ENCODE measurements at regions of chr19 and their contacts with region 1.

Region 1: DNA sequence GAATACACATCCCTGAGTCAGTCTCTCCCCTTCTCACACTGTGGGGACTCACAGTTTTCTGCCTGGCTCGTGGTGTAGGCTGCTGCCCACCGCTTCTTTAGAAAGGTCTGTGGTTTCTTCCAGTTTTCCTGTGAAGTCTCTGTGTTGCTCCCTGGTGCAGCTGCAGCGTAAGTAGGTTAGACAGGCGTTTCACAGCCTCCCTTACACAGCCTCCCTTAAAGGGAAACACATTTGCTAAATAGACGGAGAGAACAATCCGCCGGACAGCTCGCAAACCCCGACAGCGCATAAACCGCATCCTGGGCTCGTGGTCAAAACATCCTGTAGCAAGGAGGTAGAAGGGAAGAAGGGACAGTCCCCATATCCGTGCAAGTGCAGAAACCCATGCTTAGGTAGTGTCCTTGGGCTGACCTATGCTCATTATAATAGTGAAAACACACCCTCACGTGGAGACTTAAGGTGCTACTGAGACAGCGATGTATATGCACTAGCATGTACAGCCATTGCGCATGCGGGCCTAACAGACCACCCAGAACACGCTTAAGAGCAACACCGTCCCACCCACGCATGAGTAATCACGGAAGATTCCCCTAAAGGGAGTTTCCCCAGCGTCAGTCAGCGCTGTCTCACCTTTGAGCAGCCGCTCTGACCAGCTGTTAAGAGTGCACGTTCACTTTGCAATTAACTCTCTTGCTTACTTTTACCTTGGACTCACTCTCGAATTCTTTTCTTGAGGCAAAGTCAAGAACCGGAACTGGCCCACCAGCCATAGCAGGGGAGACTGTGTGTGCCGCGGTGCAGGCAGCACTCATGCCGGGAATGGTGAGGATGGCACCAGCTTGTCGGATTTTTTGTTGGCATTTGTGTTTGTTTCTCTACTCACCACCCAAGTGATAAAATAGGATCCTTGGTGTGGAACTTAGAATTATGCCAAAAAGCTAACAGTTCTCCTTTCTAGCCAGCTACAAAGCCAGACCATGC is 16.6 kb downstream of the SIGLEC8 start:
- DNase-seq: peak; percentile 27 to 87 (median 68)
- ATAC-seq: peak; percentile 91
- H3K4me3 ChIP-seq: peak overlapping the region; percentile 31
- H3K4me3 Mint-ChIP-seq: peak overlapping the region; percentile 74 to 92 (median 83)
- H3K27ac ChIP-seq: peak overlapping the region; percentile 53
- H3K27ac Mint-ChIP-seq: peak overlapping the region; percentile 49 to 88 (median 77)
- H3K4me1 ChIP-seq: peaks cover 22 to 24% of the 10 kb centered on the region in 2 donors
- H3K4me1 Mint-ChIP-seq: peaks cover 22 to 43% (median 34%) of the 10 kb centered on the region in 7 donors
- H3K27me3 ChIP-seq: peaks cover 0 to 4% of the 10 kb centered on the region in 2 donors
- H3K27me3 Mint-ChIP-seq: peaks cover 0 to 59% (median 5%) of the 10 kb centered on the region in 5 donors

Region 2: GRCh38 chr19:51292971-51293370 is 148.7 kb before region 1 on chr19:
- CTCF ChIA-PET with region 1: no interaction called
- POLR2A ChIA-PET with region 1: no interaction called
- intact Hi-C with region 1: no loop called
- DNase-seq: no peak
- ATAC-seq: no peak
- H3K4me3 ChIP-seq: no peak overlapping the region
- H3K4me3 Mint-ChIP-seq: no peak overlapping the region
- H3K27ac ChIP-seq: no peak overlapping the region
- H3K27ac Mint-ChIP-seq: no peak overlapping the region
- H3K4me1 ChIP-seq: no peaks in the 10 kb centered on the region
- H3K4me1 Mint-ChIP-seq: no peaks in the 10 kb centered on the region
- H3K27me3 ChIP-seq: no peaks in the 10 kb centered on the region
- H3K27me3 Mint-ChIP-seq: peaks cover 0 to 31% (median 6%) of the 10 kb centered on the region in 5 donors

Region 3: GRCh38 chr19:51393959-51394836 is 47.5 kb before region 1 on chr19:
- CTCF ChIA-PET with region 1: no interaction called
- POLR2A ChIA-PET with region 1: no interaction called
- intact Hi-C with region 1: loop called (anchors 1 kb)
- DNase-seq: peak; percentile 64 to 91 (median 86)
- ATAC-seq: peak; percentile 95
- H3K4me3 ChIP-seq: peak overlapping the region; percentile 46
- H3K4me3 Mint-ChIP-seq: peak overlapping the region; percentile 79 to 91 (median 86)
- H3K27ac ChIP-seq: peak overlapping the region; percentile 50
- H3K27ac Mint-ChIP-seq: peak overlapping the region; percentile 32 to 97 (median 73)
- H3K4me1 ChIP-seq: peaks cover 0 to 14% of the 10 kb centered on the region in 2 donors
- H3K4me1 Mint-ChIP-seq: peaks cover 6 to 60% (median 16%) of the 10 kb centered on the region in 7 donors
- H3K27me3 ChIP-seq: no peaks in the 10 kb centered on the region
- H3K27me3 Mint-ChIP-seq: peaks cover 0 to 4% (median 0%) of the 10 kb centered on the region in 5 donors

Measured in naive thymus-derived CD4-positive, alpha-beta T cell (primary cell).